CD4-positive, alpha-beta memory T cell (primary cell): ENCODE measurements at regions of chr11 and their contacts with region 1.

Region 1: GRCh38 chr11:9534791-9535781 is 38.4 kb upstream of the WEE1 start:
- DNase-seq: peak; percentile 63 to 73 (median 66)
- H3K4me3 ChIP-seq: no peak overlapping the region
- H3K4me3 Mint-ChIP-seq: no peak overlapping the region
- H3K27ac ChIP-seq: no peak overlapping the region
- H3K27ac Mint-ChIP-seq: peak overlapping the region in 2 of 7 donors; percentile 7 to 43
- H3K4me1 ChIP-seq: no peaks in the 10 kb centered on the region
- H3K4me1 Mint-ChIP-seq: peaks cover 0 to 2% (median 0%) of the 10 kb centered on the region in 4 donors
- H3K27me3 ChIP-seq: no peaks in the 10 kb centered on the region
- H3K27me3 Mint-ChIP-seq: no peaks in the 10 kb centered on the region

Region 2: GRCh38 chr11:9516113-9516512 is 19.0 kb before region 1 on chr11:
- CTCF ChIA-PET with region 1: interaction called, 10 read pairs
- POLR2A ChIA-PET with region 1: no interaction called
- intact Hi-C with region 1: no loop called
- DNase-seq: no peak
- H3K4me3 ChIP-seq: no peak overlapping the region
- H3K4me3 Mint-ChIP-seq: no peak overlapping the region
- H3K27ac ChIP-seq: no peak overlapping the region
- H3K27ac Mint-ChIP-seq: no peak overlapping the region
- H3K4me1 ChIP-seq: no peaks in the 10 kb centered on the region
- H3K4me1 Mint-ChIP-seq: peaks cover 0 to 2% (median 0%) of the 10 kb centered on the region in 4 donors
- H3K27me3 ChIP-seq: no peaks in the 10 kb centered on the region
- H3K27me3 Mint-ChIP-seq: no peaks in the 10 kb centered on the region

Region 3: DNA sequence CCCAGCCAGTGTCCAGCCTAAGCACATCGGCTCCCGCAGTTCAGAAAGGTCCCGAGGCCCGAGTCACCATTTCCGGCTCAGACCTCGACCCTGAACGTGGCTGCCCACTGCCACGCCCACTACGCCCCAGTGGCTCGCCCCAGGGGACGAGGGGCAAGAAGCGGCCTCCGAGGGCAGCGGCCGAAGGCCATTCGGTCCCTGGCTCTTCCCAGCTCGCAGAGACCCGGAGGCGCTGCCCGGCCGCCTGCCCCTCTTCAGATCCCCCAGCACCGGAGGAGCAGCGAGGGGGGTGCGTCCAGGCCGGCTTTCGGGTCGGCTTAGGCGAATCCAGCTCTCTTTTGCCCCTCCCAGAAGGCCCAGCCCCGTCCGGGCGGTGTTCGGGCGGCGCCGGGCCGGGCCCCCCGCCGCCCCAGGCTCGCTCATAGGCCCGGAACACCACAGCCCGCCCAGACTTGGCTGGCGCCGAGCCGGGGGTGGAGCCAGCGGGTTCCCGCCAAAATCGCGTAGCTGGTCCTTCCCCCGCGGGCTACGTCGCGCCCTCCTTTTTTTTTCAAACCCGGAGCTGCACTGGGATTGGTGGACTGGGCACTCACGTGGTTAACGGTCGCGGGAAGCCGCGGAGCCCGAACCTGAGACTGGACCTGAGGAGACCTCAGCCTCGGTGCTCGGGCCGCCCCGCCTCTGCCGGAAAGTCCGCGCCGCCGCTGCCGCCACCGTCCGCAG is 38.1 kb after region 1 on chr11 and contains the start of gene WEE1:
- CTCF ChIA-PET with region 1: interaction called, 34 read pairs
- POLR2A ChIA-PET with region 1: interaction called, 18 read pairs
- intact Hi-C with region 1: loop called (anchors 1 kb)
- DNase-seq: peak; percentile 94 to 96 (median 95)
- H3K4me3 ChIP-seq: peak within 1 kb of the TSS; percentile 42 to 80
- H3K4me3 Mint-ChIP-seq: peak within 1 kb of the TSS; percentile 85 to 93 (median 89)
- H3K27ac ChIP-seq: peak within 1 kb of the TSS; percentile 86
- H3K27ac Mint-ChIP-seq: peak within 1 kb of the TSS; percentile 85 to 95 (median 92)
- H3K4me1 ChIP-seq: peaks cover 55% of the 10 kb centered on the region
- H3K4me1 Mint-ChIP-seq: peaks cover 24 to 56% (median 39%) of the 10 kb centered on the region in 4 donors
- H3K27me3 ChIP-seq: no peaks in the 10 kb centered on the region
- H3K27me3 Mint-ChIP-seq: no peaks in the 10 kb centered on the region
- total RNA-seq, gene WEE1: 11.1 to 11.7 TPM

Region 4: DNA sequence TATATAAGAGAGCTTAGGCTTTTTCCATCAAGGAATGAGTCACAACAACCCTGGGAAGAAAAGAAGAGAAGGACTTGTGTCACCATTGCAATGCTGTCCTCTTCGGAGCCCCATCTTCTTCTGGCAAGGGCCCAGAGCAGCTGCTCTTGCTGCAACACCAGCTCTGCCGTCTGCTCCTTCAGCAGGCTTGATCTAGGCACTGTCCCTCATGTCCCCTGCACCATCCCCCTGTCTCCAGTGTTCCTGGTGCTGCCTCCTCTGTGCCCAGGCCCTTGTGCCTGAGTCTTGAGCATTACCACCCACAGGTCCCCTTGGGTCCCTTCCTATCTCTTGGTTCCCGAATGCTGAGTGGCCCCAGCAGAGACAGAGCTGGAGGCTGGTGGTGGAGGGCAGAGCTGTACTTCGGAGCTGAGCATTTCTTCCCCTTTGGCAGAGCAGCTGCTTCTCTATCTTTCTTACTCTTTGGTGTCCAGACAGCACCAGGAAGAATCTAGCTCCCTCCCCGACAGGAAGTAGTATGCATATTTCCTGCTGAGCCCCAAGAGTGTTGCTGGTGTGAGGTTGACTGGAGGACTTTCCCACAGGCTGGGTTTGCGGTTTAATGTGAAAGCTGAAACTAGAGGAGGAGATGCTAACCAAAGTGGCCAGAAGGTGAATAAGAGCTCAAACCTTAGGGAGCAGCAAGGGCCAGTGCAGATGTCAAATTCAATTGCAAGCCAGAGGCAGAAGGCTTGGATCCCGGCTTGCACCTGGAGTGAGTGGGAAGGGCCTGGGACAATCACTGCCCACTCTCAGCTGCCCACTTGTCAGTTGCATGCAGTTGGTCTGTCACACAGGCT is 66.2 kb after region 1 on chr11:
- CTCF ChIA-PET with region 1: interaction called, 23 read pairs
- POLR2A ChIA-PET with region 1: no interaction called
- intact Hi-C with region 1: no loop called
- DNase-seq: peak; percentile 45 to 80 (median 59)
- H3K4me3 ChIP-seq: peak overlapping the region; percentile 5 to 42
- H3K4me3 Mint-ChIP-seq: peak overlapping the region; percentile 64 to 88 (median 76)
- H3K27ac ChIP-seq: peak overlapping the region; percentile 62
- H3K27ac Mint-ChIP-seq: peak overlapping the region; percentile 53 to 95 (median 90)
- H3K4me1 ChIP-seq: peaks cover 19% of the 10 kb centered on the region
- H3K4me1 Mint-ChIP-seq: peaks cover 15 to 32% (median 20%) of the 10 kb centered on the region in 4 donors
- H3K27me3 ChIP-seq: no peaks in the 10 kb centered on the region
- H3K27me3 Mint-ChIP-seq: no peaks in the 10 kb centered on the region

Region 5: GRCh38 chr11:9972989-9973388 is 437.9 kb after region 1 on chr11:
- CTCF ChIA-PET with region 1: no interaction called
- POLR2A ChIA-PET with region 1: no interaction called
- intact Hi-C with region 1: loop called (anchors 5 kb)
- DNase-seq: peak in 4 of 5 donors; percentile 8 to 32 (median 18)
- H3K4me3 ChIP-seq: no peak overlapping the region
- H3K4me3 Mint-ChIP-seq: no peak overlapping the region
- H3K27ac ChIP-seq: no peak overlapping the region
- H3K27ac Mint-ChIP-seq: no peak overlapping the region
- H3K4me1 ChIP-seq: no peaks in the 10 kb centered on the region
- H3K4me1 Mint-ChIP-seq: no peaks in the 10 kb centered on the region
- H3K27me3 ChIP-seq: no peaks in the 10 kb centered on the region
- H3K27me3 Mint-ChIP-seq: no peaks in the 10 kb centered on the region

Region 6: GRCh38 chr11:10398525-10398924 is 863.4 kb after region 1 on chr11:
- CTCF ChIA-PET with region 1: no interaction called
- POLR2A ChIA-PET with region 1: no interaction called
- intact Hi-C with region 1: no loop called
- DNase-seq: no peak
- H3K4me3 ChIP-seq: no peak overlapping the region
- H3K4me3 Mint-ChIP-seq: no peak overlapping the region
- H3K27ac ChIP-seq: no peak overlapping the region
- H3K27ac Mint-ChIP-seq: no peak overlapping the region
- H3K4me1 ChIP-seq: peaks cover 15% of the 10 kb centered on the region
- H3K4me1 Mint-ChIP-seq: peaks cover 10 to 16% (median 14%) of the 10 kb centered on the region in 4 donors
- H3K27me3 ChIP-seq: no peaks in the 10 kb centered on the region
- H3K27me3 Mint-ChIP-seq: peaks cover 4 to 5% of the 10 kb centered on the region in 2 donors